Activated CD4-positive, alpha-beta T cell treated with anti-CD3 and anti-CD28 coated beads for 36 hours (primary cell): ENCODE measurements at regions of chr1 and their contacts with region 1.

Region 1: DNA sequence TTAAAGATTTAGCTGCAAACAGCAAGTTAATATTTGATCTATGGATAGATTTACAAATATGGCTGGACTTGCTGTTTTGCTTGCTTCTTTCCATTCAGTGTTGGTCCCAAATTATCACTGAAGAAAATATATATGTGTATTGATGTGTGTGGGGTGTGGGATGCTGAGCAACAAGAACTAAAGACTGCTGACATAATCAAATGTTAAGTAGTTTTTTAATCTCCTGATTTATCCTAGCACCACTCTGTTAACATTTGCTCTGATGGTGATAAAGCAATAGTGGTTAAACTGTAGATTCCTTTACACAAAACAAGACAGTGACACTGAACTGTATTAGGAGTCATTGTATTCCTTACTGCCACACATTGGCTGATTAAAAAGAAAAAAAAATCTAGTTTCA is 1023.5 kb upstream of the B3GALT2 start:
- DNase-seq: no peak
- ATAC-seq: no peak
- H3K4me3 Mint-ChIP-seq: no peak overlapping the region
- H3K27ac Mint-ChIP-seq: no peak overlapping the region
- H3K4me1 Mint-ChIP-seq: peaks cover under 1% of the 10 kb centered on the region
- H3K27me3 Mint-ChIP-seq: no peaks in the 10 kb centered on the region

Region 2: GRCh38 chr1:194228762-194229259 is 18.9 kb after region 1 on chr1:
- CTCF ChIA-PET with region 1: interaction called, 3 read pairs
- POLR2A ChIA-PET with region 1: no interaction called
- intact Hi-C with region 1: loop called in 1 of 2 experiments (anchors 2 kb)
- DNase-seq: no peak
- ATAC-seq: no peak
- H3K4me3 Mint-ChIP-seq: no peak overlapping the region
- H3K27ac Mint-ChIP-seq: no peak overlapping the region
- H3K4me1 Mint-ChIP-seq: peaks cover 15% of the 10 kb centered on the region
- H3K27me3 Mint-ChIP-seq: no peaks in the 10 kb centered on the region

Region 3: DNA sequence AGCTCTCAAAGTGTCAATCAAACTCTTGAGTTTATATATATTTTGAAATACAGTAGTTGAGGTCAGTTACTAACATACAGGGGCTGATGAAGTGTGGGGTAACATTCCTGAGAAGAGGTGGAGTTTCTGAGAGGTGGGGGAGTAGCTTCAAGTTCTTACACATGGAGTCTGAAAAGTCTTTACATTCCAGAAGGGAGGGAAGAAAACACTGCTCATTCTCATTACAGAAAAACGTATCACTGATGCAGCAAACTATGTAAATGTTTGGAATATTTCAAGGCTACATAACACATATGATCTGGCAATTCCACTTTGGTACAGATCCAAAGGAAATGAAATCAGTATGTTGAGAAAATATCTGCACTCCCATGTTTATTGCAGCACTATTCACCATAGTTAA is 42.3 kb after region 1 on chr1:
- CTCF ChIA-PET with region 1: no interaction called
- POLR2A ChIA-PET with region 1: no interaction called
- intact Hi-C with region 1: no loop called
- DNase-seq: no peak
- ATAC-seq: no peak
- H3K4me3 Mint-ChIP-seq: no peak overlapping the region
- H3K27ac Mint-ChIP-seq: no peak overlapping the region
- H3K4me1 Mint-ChIP-seq: peaks cover 6% of the 10 kb centered on the region
- H3K27me3 Mint-ChIP-seq: no peaks in the 10 kb centered on the region